ENCODE measurements at regions of chr15 and their contacts with region 1.

Region 1: DNA sequence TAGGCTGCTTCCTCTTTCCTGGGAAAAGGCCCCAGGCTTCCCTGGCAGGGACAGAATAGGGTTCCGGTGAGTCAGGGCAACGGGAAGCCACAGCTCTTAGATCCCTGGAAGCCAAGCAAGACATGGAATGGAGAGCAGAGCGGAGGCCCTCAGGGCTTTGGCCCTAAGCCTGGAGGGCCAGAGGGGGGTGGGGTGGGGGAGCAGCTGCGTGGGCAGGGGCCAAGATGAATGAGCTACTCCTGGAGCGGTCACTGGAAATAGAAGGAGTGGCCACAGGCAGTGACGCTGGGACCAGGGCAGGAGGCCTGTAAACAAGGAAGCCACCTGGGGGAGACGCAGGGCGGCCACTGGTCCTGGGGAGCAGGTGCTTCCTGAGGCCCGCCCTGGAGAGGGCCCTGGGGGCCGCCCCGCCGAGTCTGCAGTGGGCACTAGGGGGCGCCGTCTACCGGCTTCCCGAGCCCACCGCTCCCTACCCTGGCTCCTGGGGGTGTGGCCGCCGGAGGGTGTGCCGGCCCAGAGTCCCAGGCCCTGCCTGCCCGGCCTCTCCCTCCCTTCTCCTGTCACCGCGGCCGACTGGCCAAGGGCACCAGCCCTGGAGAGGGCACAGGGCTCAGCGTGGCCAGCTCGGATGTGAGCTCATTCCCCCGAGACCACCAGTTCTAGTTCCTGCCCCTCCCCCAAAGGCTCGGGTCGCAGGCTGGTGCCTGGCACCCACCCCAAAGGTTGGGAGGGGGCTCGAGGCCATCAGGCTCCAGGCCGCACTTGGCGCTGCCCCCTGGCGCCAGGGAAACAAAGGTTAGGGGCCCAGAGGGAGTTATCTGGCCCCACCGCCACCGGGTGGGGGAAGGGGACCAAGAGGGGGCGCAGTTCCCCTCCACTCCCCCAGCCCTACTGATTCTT is 12.1 kb downstream of the VPS18 start:
- DNase-seq: peak; percentile 96
- ATAC-seq: peak; percentile 80
- H3K4me3 ChIP-seq: peak overlapping the region; percentile 29
- H3K27ac ChIP-seq: peak overlapping the region; percentile 78
- H3K4me1 ChIP-seq: peaks cover 18% of the 10 kb centered on the region
- H3K27me3 ChIP-seq: no peaks in the 10 kb centered on the region
- CTCF ChIP-seq: peak; percentile 82
- POLR2A ChIP-seq: peak; percentile 45; the same call in 1 of the 2 replicates
- RAD21 ChIP-seq: peak; percentile 81

Region 2: GRCh38 chr15:40454904-40455391 is 451.4 kb before region 1 on chr15:
- CTCF ChIA-PET with region 1: no interaction called
- POLR2A ChIA-PET with region 1: no interaction called
- dilution Hi-C with region 1: no loop called
- in situ Hi-C with region 1: no loop called
- intact Hi-C with region 1: no loop called
- DNase-seq: peak; percentile 54
- ATAC-seq: peak; percentile 73
- H3K4me3 ChIP-seq: no peak overlapping the region
- H3K27ac ChIP-seq: no peak overlapping the region; the same call in 1 of the 2 replicates
- H3K4me1 ChIP-seq: peaks cover 12% of the 10 kb centered on the region
- H3K27me3 ChIP-seq: no peaks in the 10 kb centered on the region
- CTCF ChIP-seq: no peak
- POLR2A ChIP-seq: no peak
- RAD21 ChIP-seq: no peak

Region 3: DNA sequence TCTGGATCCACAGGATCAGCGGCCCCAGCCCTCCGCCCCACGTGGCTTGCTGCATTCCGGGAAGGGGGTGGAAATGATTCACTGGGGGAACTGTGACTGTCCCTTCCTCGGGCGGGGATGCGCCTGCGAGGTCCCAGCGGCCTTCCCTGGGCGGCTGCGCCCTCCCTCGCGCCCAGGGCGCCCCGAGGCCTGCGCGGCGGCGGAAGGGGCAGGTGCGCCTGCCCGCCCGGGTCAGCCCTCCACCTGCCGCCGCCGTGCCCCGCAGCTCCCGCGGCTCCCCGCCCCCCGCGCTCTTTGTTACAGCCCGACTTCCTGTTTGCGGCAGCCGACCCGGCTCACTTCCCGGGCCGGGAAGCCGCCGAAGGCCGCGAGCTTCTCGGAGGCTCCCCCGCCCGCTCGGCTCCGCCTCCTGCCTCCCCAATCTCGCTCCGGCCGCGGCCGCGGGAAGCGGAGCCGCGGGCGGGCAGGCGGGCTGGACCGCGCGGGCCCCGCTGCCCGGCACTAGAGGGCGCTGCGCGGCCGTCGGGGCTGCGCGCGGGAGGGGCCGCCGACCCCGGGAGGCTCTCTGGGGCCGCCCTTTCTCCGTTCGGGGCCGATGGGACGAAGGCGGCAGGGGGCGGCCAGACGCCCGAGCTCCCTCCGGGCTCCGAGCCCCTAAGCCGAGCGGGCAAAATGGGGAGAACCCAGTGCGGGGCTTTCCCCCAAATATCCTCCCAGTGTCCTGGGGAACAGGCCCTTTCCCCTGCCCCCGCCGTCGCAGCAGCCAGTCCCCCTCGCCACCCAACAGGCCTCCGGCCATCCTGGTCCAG is 35.4 kb after region 1 on chr15:
- CTCF ChIA-PET with region 1: interaction called, 3 read pairs
- POLR2A ChIA-PET with region 1: no interaction called
- dilution Hi-C with region 1: no loop called
- in situ Hi-C with region 1: no loop called
- intact Hi-C with region 1: loop called (anchors 1 kb)
- DNase-seq: peak; percentile 73
- ATAC-seq: peak; percentile 89
- H3K4me3 ChIP-seq: peak overlapping the region; percentile 30
- H3K27ac ChIP-seq: peak overlapping the region; percentile 82
- H3K4me1 ChIP-seq: peaks cover 21% of the 10 kb centered on the region
- H3K27me3 ChIP-seq: no peaks in the 10 kb centered on the region
- CTCF ChIP-seq: peak; percentile 84
- POLR2A ChIP-seq: peak; percentile 75
- RAD21 ChIP-seq: peak; percentile 77

Region 4: GRCh38 chr15:41022487-41023090 is 116.2 kb after region 1 on chr15:
- CTCF ChIA-PET with region 1: interaction called, 20 read pairs
- POLR2A ChIA-PET with region 1: no interaction called
- dilution Hi-C with region 1: no loop called
- in situ Hi-C with region 1: loop called (anchors 10 kb)
- intact Hi-C with region 1: loop called (anchors 1 kb)
- DNase-seq: peak; percentile 75
- ATAC-seq: peak; percentile 69
- H3K4me3 ChIP-seq: no peak overlapping the region
- H3K27ac ChIP-seq: no peak overlapping the region
- H3K4me1 ChIP-seq: peaks cover 14% of the 10 kb centered on the region
- H3K27me3 ChIP-seq: no peaks in the 10 kb centered on the region
- CTCF ChIP-seq: peak; percentile 90
- POLR2A ChIP-seq: peak; percentile 43; the same call in 1 of the 2 replicates
- RAD21 ChIP-seq: peak; percentile 93

Region 5: GRCh38 chr15:41180206-41180789 is 274.0 kb after region 1 on chr15:
- CTCF ChIA-PET with region 1: interaction called, 8 read pairs
- POLR2A ChIA-PET with region 1: no interaction called
- dilution Hi-C with region 1: no loop called
- in situ Hi-C with region 1: loop called (anchors 5 kb)
- intact Hi-C with region 1: loop called (anchors 1 kb)
- DNase-seq: peak; percentile 64
- ATAC-seq: peak; percentile 33; the same call in 1 of the 2 replicates
- H3K4me3 ChIP-seq: no peak overlapping the region
- H3K27ac ChIP-seq: no peak overlapping the region
- H3K4me1 ChIP-seq: peaks cover 11% of the 10 kb centered on the region; the same call in 1 of the 2 replicates
- H3K27me3 ChIP-seq: no peaks in the 10 kb centered on the region
- CTCF ChIP-seq: no peak
- POLR2A ChIP-seq: no peak
- RAD21 ChIP-seq: no peak

Region 6: DNA sequence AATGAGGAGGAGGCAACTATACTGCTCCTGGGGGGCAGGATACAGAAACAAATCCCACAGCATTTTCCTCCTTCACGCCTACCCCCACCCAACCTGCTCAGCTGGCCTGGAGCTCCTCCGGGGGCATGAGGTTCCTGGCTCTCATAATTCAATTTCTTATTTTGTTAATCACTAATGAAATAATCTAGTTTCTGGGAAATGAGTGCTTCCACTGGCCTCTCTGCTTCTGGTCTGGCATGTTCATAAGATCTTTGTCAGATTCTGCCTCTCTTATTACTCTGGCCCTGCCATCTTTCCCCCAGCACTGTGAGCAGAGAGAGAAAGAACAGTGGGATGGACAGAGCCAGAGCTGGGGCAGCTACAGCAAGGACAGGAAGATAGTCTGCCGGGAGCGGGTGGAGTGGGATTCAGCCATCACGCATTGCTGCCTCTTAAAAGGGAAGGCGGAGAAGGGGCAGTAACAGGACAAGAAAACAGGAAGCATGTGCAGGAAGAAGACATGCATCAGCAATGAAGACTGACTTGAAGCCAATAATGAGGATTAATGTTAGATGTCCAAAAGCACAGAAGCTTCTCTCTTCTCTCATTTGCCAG is 624.1 kb after region 1 on chr15:
- CTCF ChIA-PET with region 1: no interaction called
- POLR2A ChIA-PET with region 1: no interaction called
- dilution Hi-C with region 1: no loop called
- in situ Hi-C with region 1: no loop called
- intact Hi-C with region 1: no loop called
- DNase-seq: no peak
- ATAC-seq: no peak
- H3K4me3 ChIP-seq: no peak overlapping the region
- H3K27ac ChIP-seq: no peak overlapping the region
- H3K4me1 ChIP-seq: no peaks in the 10 kb centered on the region
- H3K27me3 ChIP-seq: no peaks in the 10 kb centered on the region
- CTCF ChIP-seq: no peak
- POLR2A ChIP-seq: no peak
- RAD21 ChIP-seq: no peak